ENCODE measurements at regions of chr4 and their contacts with region 1.

Region 1: DNA sequence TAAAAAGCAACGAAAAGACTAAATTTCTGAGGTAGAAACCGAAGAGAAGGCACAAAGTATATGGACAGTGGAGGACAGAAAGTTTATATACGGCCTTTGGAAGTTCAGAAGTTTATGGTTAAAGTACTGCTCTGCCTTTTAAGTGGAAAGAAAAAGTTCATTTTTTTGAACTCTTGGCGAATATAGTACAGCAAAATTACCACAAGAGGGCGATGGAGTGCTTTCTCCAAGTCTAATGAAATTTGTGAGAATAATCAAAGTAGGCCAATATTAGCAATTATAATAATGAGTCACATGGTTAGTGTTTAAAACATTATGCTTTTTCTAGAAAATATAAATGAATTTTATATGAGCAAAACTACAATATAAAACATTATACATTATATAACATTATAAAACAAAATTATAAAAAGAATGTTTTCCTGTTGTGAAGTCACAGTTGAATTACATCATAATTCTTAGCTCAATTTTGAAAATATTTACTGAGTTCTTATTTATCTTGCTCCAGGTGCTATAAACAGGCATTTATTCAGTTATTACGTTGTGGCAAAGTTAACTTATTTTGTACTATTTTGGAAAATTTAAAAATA is 136.2 kb upstream of the BMPR1B start:
- DNase-seq: peak in 4 of 7 donors; percentile 16 to 26 (median 24)
- H3K4me3 ChIP-seq: no peak overlapping the region
- H3K27ac ChIP-seq: no peak overlapping the region
- H3K4me1 ChIP-seq: no peaks in the 10 kb centered on the region
- H3K27me3 ChIP-seq: no peaks in the 10 kb centered on the region
- CTCF ChIP-seq: peak; percentile 60 to 93 (median 75)
- POLR2A ChIP-seq: no peak

Region 2: DNA sequence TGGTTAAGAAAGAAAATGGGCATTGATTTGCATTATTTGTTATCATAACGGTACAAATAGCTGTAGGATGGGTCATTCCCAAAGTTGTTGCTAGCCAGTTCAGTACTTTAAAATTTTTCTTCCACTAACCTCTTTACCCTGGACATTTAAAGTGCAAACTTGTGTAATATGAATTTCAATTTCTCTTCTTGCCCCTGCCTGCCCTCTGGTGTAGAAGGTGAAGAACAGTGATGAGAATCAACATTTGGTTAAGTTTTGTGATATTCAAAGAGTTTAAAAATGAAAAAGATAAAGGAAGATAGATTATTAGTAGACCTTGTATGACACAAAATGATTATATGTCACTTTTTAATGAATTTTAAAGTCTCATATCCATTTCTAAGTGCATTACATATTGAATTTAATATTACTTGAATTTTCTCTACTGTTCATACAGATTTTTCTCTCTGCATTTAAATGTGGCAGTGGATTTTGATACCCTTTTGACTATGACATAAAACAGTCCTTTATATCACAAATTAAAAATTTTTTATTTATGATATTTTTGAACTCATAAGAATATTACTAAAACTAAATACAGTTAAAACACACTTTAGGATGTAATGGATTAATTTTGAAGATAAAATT is 473.9 kb after region 1 on chr4:
- intact Hi-C with region 1: loop called in 1 of 2 experiments (anchors 10 kb)
- DNase-seq: peak in 4 of 7 donors; percentile 6 to 21 (median 14)
- H3K4me3 ChIP-seq: no peak overlapping the region
- H3K27ac ChIP-seq: no peak overlapping the region
- H3K4me1 ChIP-seq: no peaks in the 10 kb centered on the region
- H3K27me3 ChIP-seq: no peaks in the 10 kb centered on the region
- CTCF ChIP-seq: peak; percentile 8 to 61 (median 48)
- POLR2A ChIP-seq: no peak

Region 3: GRCh38 chr4:95124906-95125504 is 503.4 kb after region 1 on chr4:
- intact Hi-C with region 1: loop called in 1 of 2 experiments (anchors 10 kb)
- DNase-seq: peak in 6 of 7 donors; percentile 22 to 35 (median 31)
- H3K4me3 ChIP-seq: no peak overlapping the region
- H3K27ac ChIP-seq: no peak overlapping the region
- H3K4me1 ChIP-seq: no peaks in the 10 kb centered on the region
- H3K27me3 ChIP-seq: no peaks in the 10 kb centered on the region
- CTCF ChIP-seq: peak; percentile 29 to 54 (median 44)
- POLR2A ChIP-seq: no peak

Measured in adrenal gland (tissue), 19 donors.